Breast epithelium (tissue), 4 donors: ENCODE measurements at regions of chr2 and their contacts with region 1.

Region 1: GRCh38 chr2:182606728-182607681 is 109.1 kb upstream of the DNAJC10 start:
- DNase-seq: no peak
- H3K4me3 ChIP-seq: no peak overlapping the region
- H3K27ac ChIP-seq: no peak overlapping the region
- H3K4me1 ChIP-seq: no peaks in the 10 kb centered on the region
- H3K27me3 ChIP-seq: no peaks in the 10 kb centered on the region
- CTCF ChIP-seq: no peak
- POLR2A ChIP-seq: no peak

Region 2: DNA sequence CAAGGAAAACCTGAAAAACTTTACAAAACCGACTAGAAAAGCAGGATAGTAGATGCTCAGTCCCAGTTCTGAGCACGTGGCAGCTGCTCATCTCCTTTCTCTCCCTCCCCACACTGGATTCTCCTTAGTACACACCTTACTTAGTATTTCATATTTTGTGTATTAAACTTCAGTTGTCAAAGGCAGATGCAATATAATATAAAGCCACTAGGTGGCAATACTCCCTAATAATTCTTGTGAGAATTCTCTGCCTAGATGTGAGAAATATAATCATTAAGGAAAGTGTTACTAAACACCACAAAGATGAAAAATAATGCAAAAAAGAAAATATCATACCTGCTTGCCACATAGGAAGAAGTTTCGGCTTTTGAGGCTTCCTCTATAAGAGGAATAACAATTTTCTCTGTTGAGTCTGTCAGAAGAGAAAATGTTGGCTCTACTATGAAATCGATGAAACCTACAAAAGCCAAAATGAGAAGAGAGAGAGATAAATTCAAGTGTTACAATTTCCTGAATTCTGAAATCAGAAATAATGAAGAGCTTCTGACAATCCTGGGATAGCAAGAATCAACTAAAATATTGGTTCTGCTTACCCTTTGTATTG is 420.8 kb before region 1 on chr2:
- intact Hi-C with region 1: loop called (anchors 5 kb)
- DNase-seq: no peak
- H3K4me3 ChIP-seq: no peak overlapping the region
- H3K27ac ChIP-seq: no peak overlapping the region
- H3K4me1 ChIP-seq: no peaks in the 10 kb centered on the region
- H3K27me3 ChIP-seq: no peaks in the 10 kb centered on the region
- CTCF ChIP-seq: peak; percentile 70 to 88 (median 85)
- POLR2A ChIP-seq: no peak